ENCODE measurements at regions of chr10 and their contacts with region 1.

Region 1: DNA sequence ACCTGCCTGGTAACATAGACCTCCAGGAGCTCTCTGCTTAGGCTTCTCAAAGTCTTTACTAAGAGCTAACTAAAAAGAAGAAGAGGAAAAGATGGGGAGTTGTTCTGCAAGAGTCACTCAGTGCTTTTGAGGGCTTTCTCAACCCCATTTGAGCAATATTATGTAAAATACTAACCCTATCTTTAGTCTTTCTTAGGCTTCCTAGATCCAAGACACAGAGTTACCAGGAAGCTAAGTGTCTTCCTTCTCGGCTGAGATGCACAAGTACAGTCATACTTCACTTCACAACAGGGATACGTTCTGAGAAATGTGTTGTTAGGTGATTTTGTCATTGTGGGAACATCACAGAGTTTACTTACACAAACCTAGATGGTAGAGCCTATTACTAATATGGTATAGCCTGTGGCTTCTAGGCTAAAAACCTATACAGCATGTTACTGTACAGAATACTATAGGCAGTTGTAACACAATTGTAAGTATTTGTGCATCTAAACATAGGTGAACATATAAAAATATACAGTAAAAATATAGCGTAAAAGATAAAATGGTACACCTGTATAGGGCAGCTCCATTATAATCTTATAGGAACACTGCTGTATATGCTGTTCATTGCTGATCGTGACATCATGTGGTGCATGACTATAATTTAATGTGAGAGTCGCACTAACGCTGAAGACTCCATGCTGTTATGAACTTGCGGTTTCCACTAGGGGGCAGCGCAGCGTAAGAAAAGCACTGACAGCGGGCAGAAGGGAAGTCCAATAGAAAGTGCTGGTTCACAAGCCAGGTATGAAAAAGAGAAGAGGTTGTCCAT is 16.3 kb downstream of the ANKRD22 start:
- DNase-seq: no peak
- H3K4me3 ChIP-seq: no peak overlapping the region
- CTCF ChIP-seq: peak; percentile 87

Region 2: GRCh38 chr10:88687853-88688467 is 147.3 kb before region 1 on chr10:
- CTCF ChIA-PET with region 1: interaction called, 20 read pairs
- POLR2A ChIA-PET with region 1: no interaction called
- DNase-seq: no peak
- H3K4me3 ChIP-seq: no peak overlapping the region
- CTCF ChIP-seq: peak; percentile 55

Region 3: DNA sequence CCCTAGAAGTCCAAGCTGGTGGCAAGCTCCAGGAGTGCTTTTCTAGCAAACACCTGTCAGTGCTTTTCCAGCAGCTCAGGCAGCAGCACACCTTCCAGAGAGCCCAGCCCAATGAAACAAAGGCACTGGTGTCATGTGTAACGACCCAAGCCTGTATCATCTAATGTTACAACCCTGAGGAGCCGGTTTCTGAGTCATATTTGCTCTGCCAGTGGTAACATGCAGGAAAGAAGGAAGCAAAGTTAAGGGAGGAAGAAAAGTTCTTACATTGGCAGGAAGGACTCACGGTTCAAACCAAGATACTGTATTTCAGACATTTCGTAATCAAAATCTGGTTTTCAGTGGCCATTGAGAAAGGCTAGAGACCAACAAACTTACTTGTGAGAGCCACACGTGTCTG is 16.4 kb after region 1 on chr10 and contains the start of gene ANKRD22:
- CTCF ChIA-PET with region 1: interaction called, 103 read pairs
- POLR2A ChIA-PET with region 1: no interaction called
- DNase-seq: no peak
- H3K4me3 ChIP-seq: no peak within 1 kb of the TSS
- CTCF ChIP-seq: no peak

Region 4: DNA sequence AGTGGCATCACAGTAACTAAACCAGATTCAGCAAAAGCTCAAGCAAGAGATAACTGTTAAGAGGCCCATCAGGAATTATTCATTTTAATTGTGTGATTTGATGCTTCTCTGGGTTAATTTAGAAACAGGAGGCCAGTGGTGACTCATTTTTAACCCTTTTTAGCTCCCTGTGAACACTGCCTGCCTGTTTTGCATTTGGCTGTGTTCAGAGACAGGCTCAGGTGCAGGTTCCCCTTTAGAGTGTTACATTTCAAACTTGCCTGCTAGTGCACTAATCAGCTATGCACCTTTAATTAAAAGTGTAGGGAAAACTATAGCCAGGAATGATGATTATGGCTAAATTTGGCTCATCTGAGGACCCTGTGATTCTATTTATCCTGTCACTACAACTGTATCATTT is 51.3 kb after region 1 on chr10:
- CTCF ChIA-PET with region 1: interaction called, 20 read pairs
- POLR2A ChIA-PET with region 1: no interaction called
- DNase-seq: no peak
- H3K4me3 ChIP-seq: no peak overlapping the region
- CTCF ChIP-seq: no peak

Region 5: DNA sequence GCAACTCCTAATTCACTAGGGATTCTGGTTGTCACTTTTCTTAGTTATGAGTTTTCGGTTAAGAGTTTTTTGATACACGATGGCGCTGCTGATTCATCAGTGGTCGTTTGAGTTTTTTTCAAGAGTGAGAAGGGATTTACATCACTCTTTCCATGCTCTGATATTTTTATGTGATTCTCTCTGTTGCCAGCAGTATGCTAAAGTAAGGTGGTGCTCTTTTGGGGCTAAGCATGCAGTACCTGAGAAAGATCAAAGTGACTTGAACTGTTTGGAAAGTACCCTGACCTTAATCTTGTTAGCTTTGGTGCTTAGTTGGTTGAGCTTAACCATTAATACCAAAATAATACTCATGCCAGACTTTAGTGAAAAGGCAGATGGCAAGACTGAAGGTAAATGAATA is 72.9 kb after region 1 on chr10:
- CTCF ChIA-PET with region 1: interaction called, 15 read pairs
- POLR2A ChIA-PET with region 1: no interaction called
- DNase-seq: no peak
- H3K4me3 ChIP-seq: no peak overlapping the region
- CTCF ChIP-seq: no peak

Region 6: GRCh38 chr10:88944813-88945212 is 109.5 kb after region 1 on chr10:
- CTCF ChIA-PET with region 1: interaction called, 43 read pairs
- POLR2A ChIA-PET with region 1: no interaction called
- DNase-seq: no peak
- H3K4me3 ChIP-seq: no peak overlapping the region
- CTCF ChIP-seq: no peak

Region 7: GRCh38 chr10:89022734-89023133 is 187.4 kb after region 1 on chr10:
- CTCF ChIA-PET with region 1: interaction called, 11 read pairs
- POLR2A ChIA-PET with region 1: no interaction called
- DNase-seq: no peak
- H3K4me3 ChIP-seq: no peak overlapping the region
- CTCF ChIP-seq: no peak

Measured in AG04449 (cell line).